Caco-2 (cell line): ENCODE measurements at regions of chr12 and their contacts with region 1.

Region 1: DNA sequence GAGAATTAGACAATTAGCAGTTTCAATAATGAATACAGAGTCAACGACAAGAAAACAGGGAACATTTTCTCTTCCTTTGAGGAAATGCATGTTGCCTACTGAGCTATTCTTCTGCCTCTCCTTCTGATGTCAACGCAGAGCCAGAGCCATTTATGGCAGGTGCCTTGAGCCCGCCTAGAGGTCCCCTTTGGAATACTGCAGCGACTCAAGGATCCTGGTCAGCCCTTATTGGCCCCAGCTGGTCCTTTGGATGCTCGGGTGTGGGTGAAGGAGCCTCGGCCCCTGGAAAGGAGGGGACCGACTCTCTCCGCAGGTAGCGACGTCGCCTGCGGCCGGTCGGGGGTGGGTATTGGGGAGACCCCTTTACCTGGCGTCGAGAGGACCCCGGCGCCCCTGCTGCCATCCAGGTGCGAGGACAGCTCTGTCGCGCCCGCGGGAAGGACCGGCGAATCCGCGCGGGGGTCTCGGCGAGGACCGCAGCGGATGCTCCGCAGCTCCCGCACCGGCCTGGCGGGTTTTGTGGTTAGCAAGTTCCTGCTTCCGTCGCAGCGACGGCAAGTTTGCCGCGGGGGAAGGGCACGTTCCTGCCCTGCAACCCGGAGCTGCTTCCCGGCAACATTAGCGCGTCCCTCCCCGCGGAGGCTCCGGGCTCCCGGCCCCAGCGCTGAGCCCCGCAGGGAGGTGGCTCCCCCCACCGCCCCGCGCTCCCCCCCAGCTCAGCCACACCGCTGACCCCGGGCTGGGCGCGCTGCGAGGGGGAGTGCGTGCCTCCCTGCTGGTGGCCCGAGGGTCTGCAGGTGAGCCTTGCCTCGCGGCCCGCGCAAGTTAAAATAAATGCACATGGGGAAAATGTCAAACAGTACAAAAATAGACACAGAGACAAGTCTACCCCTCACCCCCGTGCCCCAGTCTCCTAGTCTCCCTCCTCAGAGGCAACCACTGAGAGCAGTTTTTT is at the start of gene MANSC1:
- DNase-seq: peak; percentile 83 to 84
- H3K4me3 ChIP-seq: peak within 1 kb of the TSS; percentile 86
- H3K4me3 Mint-ChIP-seq: peak within 1 kb of the TSS; percentile 83
- H3K27ac Mint-ChIP-seq: peak within 1 kb of the TSS; percentile 85
- H3K4me1 ChIP-seq: peaks cover 13% of the 10 kb centered on the region
- H3K4me1 Mint-ChIP-seq: peaks cover 15% of the 10 kb centered on the region
- H3K27me3 ChIP-seq: no peaks in the 10 kb centered on the region
- H3K27me3 Mint-ChIP-seq: no peaks in the 10 kb centered on the region
- CTCF ChIP-seq: peak; percentile 69 to 89
- total RNA-seq, gene MANSC1: 27.5 and 28.9 TPM in 2 replicates

Region 2: GRCh38 chr12:12334367-12335040 is 15.5 kb before region 1 on chr12:
- CTCF ChIA-PET with region 1: interaction called, 12 read pairs
- POLR2A ChIA-PET with region 1: interaction called, 4 read pairs
- intact Hi-C with region 1: loop called (anchors 2 kb)
- DNase-seq: peak; percentile 75 to 83
- H3K4me3 ChIP-seq: no peak overlapping the region
- H3K4me3 Mint-ChIP-seq: no peak overlapping the region
- H3K27ac Mint-ChIP-seq: peak overlapping the region; percentile 34
- H3K4me1 ChIP-seq: peaks cover 16% of the 10 kb centered on the region
- H3K4me1 Mint-ChIP-seq: peaks cover 31% of the 10 kb centered on the region
- H3K27me3 ChIP-seq: no peaks in the 10 kb centered on the region
- H3K27me3 Mint-ChIP-seq: no peaks in the 10 kb centered on the region
- CTCF ChIP-seq: peak; percentile 89 to 99

Region 3: GRCh38 chr12:12474931-12475795 is 125.2 kb after region 1 on chr12:
- CTCF ChIA-PET with region 1: no interaction called
- POLR2A ChIA-PET with region 1: no interaction called
- intact Hi-C with region 1: no loop called
- DNase-seq: no peak
- H3K4me3 ChIP-seq: no peak overlapping the region
- H3K4me3 Mint-ChIP-seq: no peak overlapping the region
- H3K27ac Mint-ChIP-seq: peak overlapping the region; percentile 19
- H3K4me1 ChIP-seq: no peaks in the 10 kb centered on the region
- H3K4me1 Mint-ChIP-seq: peaks cover 6% of the 10 kb centered on the region
- H3K27me3 ChIP-seq: no peaks in the 10 kb centered on the region
- H3K27me3 Mint-ChIP-seq: no peaks in the 10 kb centered on the region
- CTCF ChIP-seq: no peak